ENCODE measurements at regions of chr2 and their contacts with region 1.

Region 1: GRCh38 chr2:176454893-176455811 is 185.9 kb downstream of the MTX2 start:
- ATAC-seq: peak; percentile 18 to 79 (median 52)
- H3K4me3 ChIP-seq: peak overlapping the region in 1 of 5 donors; percentile 5
- H3K27ac ChIP-seq: peak overlapping the region; percentile 56 to 58
- H3K4me1 ChIP-seq: peaks cover 33 to 38% of the 10 kb centered on the region in 2 donors

Region 2: GRCh38 chr2:176554101-176555048 is 99.2 kb after region 1 on chr2:
- in situ Hi-C with region 1: loop called in 1 of 9 experiments (anchors 25 kb)
- ATAC-seq: peak; percentile 61 to 95 (median 88)
- H3K4me3 ChIP-seq: peak overlapping the region; percentile 11 to 38 (median 28)
- H3K27ac ChIP-seq: peak overlapping the region; percentile 35 to 90
- H3K4me1 ChIP-seq: peaks cover 12 to 21% of the 10 kb centered on the region in 2 donors

Measured in motor neuron (in vitro differentiated cells).